ENCODE measurements at regions of chr3 and their contacts with region 1.

Region 1: GRCh38 chr3:184543843-184544512 is 17.6 kb upstream of the EPHB3 start:
- DNase-seq: peak; percentile 83 to 94
- H3K4me3 ChIP-seq: no peak overlapping the region
- H3K27ac ChIP-seq: no peak overlapping the region
- H3K4me1 ChIP-seq: peaks cover 0 to 8% (median 7%) of the 10 kb centered on the region in 4 donors
- H3K27me3 ChIP-seq: peaks cover 0 to 39% (median 5%) of the 10 kb centered on the region in 3 donors
- CTCF ChIP-seq: peak in 5 of 7 experiments; percentile 71 to 94 (median 89)
- EP300 ChIP-seq: no peak
- POLR2A ChIP-seq: no peak

Region 2: DNA sequence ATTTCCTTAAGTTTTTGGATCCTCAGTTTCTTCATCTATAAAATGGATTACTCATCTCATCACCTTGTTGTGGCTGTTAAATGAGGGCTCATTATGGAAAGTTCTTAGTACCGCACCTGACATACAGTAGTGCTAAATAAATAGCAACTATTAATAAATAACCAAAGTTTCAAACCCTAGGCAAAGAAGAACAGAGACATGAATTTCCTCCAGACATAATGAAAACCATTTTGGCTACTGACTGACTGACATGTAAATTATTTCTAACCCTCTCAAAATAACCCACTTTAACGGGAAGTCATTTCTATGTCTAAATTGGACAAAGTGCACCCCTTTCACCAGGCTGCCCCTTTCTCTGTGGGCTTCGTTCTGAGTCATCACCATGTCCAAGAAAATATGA is 971.0 kb before region 1 on chr3:
- intact Hi-C with region 1: no loop called
- DNase-seq: no peak
- H3K4me3 ChIP-seq: no peak overlapping the region
- H3K27ac ChIP-seq: no peak overlapping the region
- H3K4me1 ChIP-seq: no peaks in the 10 kb centered on the region
- H3K27me3 ChIP-seq: no peaks in the 10 kb centered on the region
- CTCF ChIP-seq: no peak
- EP300 ChIP-seq: no peak
- POLR2A ChIP-seq: no peak

Region 3: GRCh38 chr3:184417619-184418327 is 126.2 kb before region 1 on chr3:
- intact Hi-C with region 1: loop called (anchors 5 kb)
- DNase-seq: peak; percentile 80 to 87
- H3K4me3 ChIP-seq: no peak overlapping the region
- H3K27ac ChIP-seq: no peak overlapping the region
- H3K4me1 ChIP-seq: peaks cover 0 to 4% (median 0%) of the 10 kb centered on the region in 4 donors
- H3K27me3 ChIP-seq: no peaks in the 10 kb centered on the region
- CTCF ChIP-seq: peak in 5 of 7 experiments; percentile 75 to 95 (median 89)
- EP300 ChIP-seq: no peak
- POLR2A ChIP-seq: no peak

Region 4: GRCh38 chr3:184583578-184584425 is 39.8 kb after region 1 on chr3:
- intact Hi-C with region 1: no loop called
- DNase-seq: peak in 1 of 2 donors; percentile 84
- H3K4me3 ChIP-seq: peak overlapping the region; percentile 51 to 55 (median 52)
- H3K27ac ChIP-seq: peak overlapping the region in 4 of 5 donors; percentile 27 to 83 (median 62)
- H3K4me1 ChIP-seq: peaks cover 4 to 44% (median 26%) of the 10 kb centered on the region in 4 donors
- H3K27me3 ChIP-seq: peaks cover 0 to 15% (median 0%) of the 10 kb centered on the region in 3 donors
- CTCF ChIP-seq: peak in 1 of 7 experiments; percentile 9
- EP300 ChIP-seq: no peak
- POLR2A ChIP-seq: no peak

Region 5: GRCh38 chr3:184620475-184621119 is 76.6 kb after region 1 on chr3:
- intact Hi-C with region 1: no loop called
- DNase-seq: no peak
- H3K4me3 ChIP-seq: no peak overlapping the region
- H3K27ac ChIP-seq: no peak overlapping the region
- H3K4me1 ChIP-seq: peaks cover 0 to 8% (median 5%) of the 10 kb centered on the region in 4 donors
- H3K27me3 ChIP-seq: no peaks in the 10 kb centered on the region
- CTCF ChIP-seq: no peak
- EP300 ChIP-seq: no peak
- POLR2A ChIP-seq: no peak

Region 6: DNA sequence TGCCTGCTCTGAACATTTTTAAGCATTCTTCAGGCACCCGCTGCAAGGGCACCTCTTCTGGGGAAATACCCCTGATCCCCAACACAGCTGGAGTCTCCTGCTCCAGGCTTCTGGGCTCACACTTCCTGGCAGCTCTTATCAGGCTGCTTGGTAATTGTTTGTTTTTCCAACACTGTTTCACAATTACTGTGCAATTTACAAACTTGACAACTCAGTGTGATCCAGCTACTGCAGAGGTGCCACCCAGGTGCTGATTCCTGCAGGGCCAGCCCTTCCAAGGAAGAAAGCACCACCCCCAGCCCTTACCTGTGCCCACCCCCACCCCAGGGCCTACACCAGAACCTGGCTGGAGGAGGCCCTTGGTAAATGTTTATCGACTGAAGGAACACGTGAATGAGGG is 101.4 kb after region 1 on chr3:
- intact Hi-C with region 1: no loop called
- DNase-seq: peak; percentile 80 to 88
- H3K4me3 ChIP-seq: no peak overlapping the region
- H3K27ac ChIP-seq: peak overlapping the region in 4 of 5 donors; percentile 5 to 60 (median 44)
- H3K4me1 ChIP-seq: peaks cover 0 to 21% (median 20%) of the 10 kb centered on the region in 4 donors
- H3K27me3 ChIP-seq: no peaks in the 10 kb centered on the region
- CTCF ChIP-seq: no peak
- EP300 ChIP-seq: no peak
- POLR2A ChIP-seq: no peak